AG04450 (cell line): ENCODE measurements at regions of chr11 and their contacts with region 1.

Region 1: GRCh38 chr11:77619576-77620198 is 17.9 kb downstream of the CLNS1A start:
- DNase-seq: no peak
- H3K4me3 ChIP-seq: no peak overlapping the region
- H3K27ac ChIP-seq: no peak overlapping the region
- H3K27me3 ChIP-seq: no peaks in the 10 kb centered on the region
- CTCF ChIP-seq: peak; percentile 81

Region 2: GRCh38 chr11:77127232-77127911 is 492.3 kb before region 1 on chr11:
- CTCF ChIA-PET with region 1: interaction called, 16 read pairs
- POLR2A ChIA-PET with region 1: no interaction called
- DNase-seq: no peak
- H3K4me3 ChIP-seq: peak overlapping the region; percentile 59
- H3K27ac ChIP-seq: no peak overlapping the region
- H3K27me3 ChIP-seq: no peaks in the 10 kb centered on the region
- CTCF ChIP-seq: peak; percentile 100

Region 3: GRCh38 chr11:77198440-77198849 is 421.2 kb before region 1 on chr11:
- CTCF ChIA-PET with region 1: interaction called, 29 read pairs
- POLR2A ChIA-PET with region 1: no interaction called
- DNase-seq: no peak
- H3K4me3 ChIP-seq: no peak overlapping the region
- H3K27ac ChIP-seq: no peak overlapping the region
- H3K27me3 ChIP-seq: no peaks in the 10 kb centered on the region
- CTCF ChIP-seq: peak; percentile 44

Region 4: DNA sequence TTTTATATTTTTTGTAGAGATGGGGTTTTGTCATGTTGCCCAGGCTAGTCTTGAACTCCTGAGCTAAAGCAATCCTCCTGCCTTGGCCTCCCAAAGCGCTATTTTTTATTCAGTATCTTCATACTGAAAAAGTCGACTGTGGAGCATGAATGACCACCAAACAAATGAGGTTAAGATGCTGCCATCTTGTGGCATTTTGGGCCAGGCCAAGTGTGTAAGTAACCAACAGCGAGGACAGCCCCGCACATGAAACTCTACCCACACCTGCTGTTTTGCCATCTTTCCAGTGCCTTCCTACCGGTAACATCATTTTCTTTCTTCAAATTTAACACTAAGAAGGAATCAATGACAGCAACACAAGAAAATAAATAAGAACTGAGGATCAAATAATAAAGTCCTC is 62.1 kb before region 1 on chr11:
- CTCF ChIA-PET with region 1: no interaction called
- POLR2A ChIA-PET with region 1: no interaction called
- DNase-seq: no peak
- H3K4me3 ChIP-seq: no peak overlapping the region
- H3K27ac ChIP-seq: no peak overlapping the region
- H3K27me3 ChIP-seq: no peaks in the 10 kb centered on the region
- CTCF ChIP-seq: 0 out of 2 replicates have a peak, but pooled peaks have one; percentile 10

Region 5: DNA sequence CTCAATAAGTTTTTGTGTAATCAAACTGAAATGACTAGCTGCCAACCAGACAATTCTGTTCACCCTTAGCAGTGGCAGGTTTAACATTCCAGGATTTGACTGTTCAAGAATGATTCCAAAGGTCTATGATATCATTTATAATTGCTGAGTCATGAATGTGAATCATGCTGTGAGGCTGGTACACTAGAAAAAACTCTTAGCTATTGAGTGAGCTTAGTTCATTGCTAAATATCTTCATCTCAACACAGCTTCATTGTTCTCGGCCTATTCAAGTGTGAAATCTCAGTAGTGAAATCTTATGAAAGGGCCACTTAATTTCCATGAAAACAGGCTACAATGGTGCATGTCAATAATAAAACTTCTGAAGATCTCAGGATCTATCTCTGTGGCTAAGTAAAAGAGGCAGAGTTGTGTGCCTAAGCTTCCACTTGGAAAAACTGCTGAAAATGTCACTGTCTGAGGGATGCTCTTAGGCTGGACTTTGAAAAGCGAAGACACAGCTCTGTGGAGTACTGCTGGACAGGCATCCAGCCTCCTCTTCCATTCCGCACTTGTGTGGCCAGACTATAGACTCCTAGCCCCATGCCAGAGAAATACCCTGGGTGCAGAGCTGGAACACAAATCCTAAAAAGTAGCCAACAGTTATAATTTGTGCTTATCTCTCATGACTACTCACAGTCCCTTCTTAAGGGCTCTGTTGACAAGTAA is 17.2 kb before region 1 on chr11:
- CTCF ChIA-PET with region 1: interaction called, 13 read pairs
- POLR2A ChIA-PET with region 1: interaction called, 5 read pairs
- DNase-seq: peak; percentile 66
- H3K4me3 ChIP-seq: no peak overlapping the region
- H3K27ac ChIP-seq: peak overlapping the region; percentile 95
- H3K27me3 ChIP-seq: no peaks in the 10 kb centered on the region
- CTCF ChIP-seq: no peak

Region 6: GRCh38 chr11:77630157-77630710 is 10.5 kb after region 1 on chr11:
- CTCF ChIA-PET with region 1: interaction called, 17 read pairs
- POLR2A ChIA-PET with region 1: no interaction called
- DNase-seq: no peak
- H3K4me3 ChIP-seq: no peak overlapping the region
- H3K27ac ChIP-seq: no peak overlapping the region
- H3K27me3 ChIP-seq: no peaks in the 10 kb centered on the region
- CTCF ChIP-seq: no peak

Region 7: DNA sequence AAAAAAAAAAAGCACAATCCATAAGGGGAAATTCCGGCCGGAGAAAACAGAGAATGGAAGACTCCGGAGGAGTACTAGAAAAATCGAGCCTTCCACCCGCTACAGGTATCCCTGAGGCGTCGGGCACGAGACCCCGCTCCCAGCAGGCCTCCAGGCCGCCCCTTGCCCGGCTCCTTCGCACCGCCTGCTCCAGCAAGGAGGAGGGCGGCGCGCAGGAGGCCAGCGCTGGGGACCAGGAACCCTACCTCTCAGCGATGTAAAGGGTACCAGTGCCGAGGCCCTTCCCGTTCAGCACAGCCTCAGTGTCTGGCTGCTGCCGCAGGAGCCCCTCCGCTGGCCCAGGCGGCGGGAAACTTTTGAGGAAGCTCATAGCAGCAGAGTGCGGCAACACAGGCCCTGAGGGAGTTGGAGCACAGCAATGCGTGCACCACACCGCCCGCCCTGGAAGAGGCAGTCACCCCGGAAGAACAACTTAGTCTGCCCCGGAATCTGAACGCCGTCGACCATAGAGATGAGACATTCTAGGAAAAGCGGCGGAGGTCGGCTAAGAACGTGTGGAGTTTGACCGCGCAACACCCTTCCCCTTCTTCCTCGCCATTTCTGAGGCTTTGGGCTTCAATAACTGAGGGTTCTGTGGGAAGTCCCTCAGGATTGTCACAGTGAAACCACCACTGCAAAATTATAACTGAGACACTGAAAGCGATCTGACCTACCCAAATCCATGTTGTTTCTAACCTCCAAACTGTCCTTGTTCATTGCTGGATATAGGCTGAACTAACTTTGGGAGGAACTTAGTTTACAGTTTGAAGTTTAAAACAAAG is 17.9 kb after region 1 on chr11 and contains the start of gene CLNS1A:
- CTCF ChIA-PET with region 1: interaction called, 16 read pairs
- POLR2A ChIA-PET with region 1: no interaction called
- DNase-seq: peak; percentile 66
- H3K4me3 ChIP-seq: peak within 1 kb of the TSS; percentile 72
- H3K27ac ChIP-seq: peak within 1 kb of the TSS; percentile 40
- H3K27me3 ChIP-seq: no peaks in the 10 kb centered on the region
- CTCF ChIP-seq: no peak
- polyA plus RNA-seq, gene CLNS1A: 158 and 186 TPM in 2 replicates